Activated CD4-positive, alpha-beta memory T cell treated with anti-CD3 and anti-CD28 coated beads, Interleukin-2, amount 10 ng/mL, durations not matched to agents 7 days and 5 days (primary cell): ENCODE measurements at regions of chr15 and their contacts with region 1.

Region 1: GRCh38 chr15:94335616-94336015 is 104.3 kb downstream of the MCTP2 start:
- DNase-seq: no peak
- H3K4me3 Mint-ChIP-seq: no peak overlapping the region
- H3K27ac Mint-ChIP-seq: no peak overlapping the region
- H3K4me1 Mint-ChIP-seq: no peaks in the 10 kb centered on the region
- H3K27me3 Mint-ChIP-seq: no peaks in the 10 kb centered on the region

Region 2: GRCh38 chr15:94163999-94164807 is 171.4 kb before region 1 on chr15:
- CTCF ChIA-PET with region 1: interaction called, 39 read pairs
- POLR2A ChIA-PET with region 1: no interaction called
- DNase-seq: peak; percentile 69
- H3K4me3 Mint-ChIP-seq: no peak overlapping the region
- H3K27ac Mint-ChIP-seq: no peak overlapping the region
- H3K4me1 Mint-ChIP-seq: peaks cover 9% of the 10 kb centered on the region
- H3K27me3 Mint-ChIP-seq: peaks cover 11% of the 10 kb centered on the region

Region 3: GRCh38 chr15:94526071-94526689 is 190.6 kb after region 1 on chr15:
- CTCF ChIA-PET with region 1: no interaction called
- POLR2A ChIA-PET with region 1: no interaction called
- DNase-seq: no peak
- H3K4me3 Mint-ChIP-seq: no peak overlapping the region
- H3K27ac Mint-ChIP-seq: no peak overlapping the region
- H3K4me1 Mint-ChIP-seq: no peaks in the 10 kb centered on the region
- H3K27me3 Mint-ChIP-seq: no peaks in the 10 kb centered on the region